Activated T-helper 1 cell treated with anti-CD3 and anti-CD28 coated beads, Interleukin-12 subunit alpha, Interleukin-12 subunit beta, Interleukin-2, Interleukin-4 antibody, amounts not matched to agents 30 ng/mL and 10 ng/mL and 1 ng/mL, durations not matched to agents 14 hours and 24 hours and 36 hours (primary cell): ENCODE measurements at regions of chr14 and their contacts with region 1.

Region 1: GRCh38 chr14:50785457-50786063 is 45.4 kb downstream of the NIN start:
- DNase-seq: no peak
- H3K4me3 Mint-ChIP-seq: peak overlapping the region; percentile 56
- H3K27ac Mint-ChIP-seq: peak overlapping the region; percentile 79
- H3K4me1 Mint-ChIP-seq: peaks cover 61% of the 10 kb centered on the region
- H3K27me3 Mint-ChIP-seq: no peaks in the 10 kb centered on the region

Region 2: GRCh38 chr14:50344116-50344775 is 441.3 kb before region 1 on chr14:
- intact Hi-C with region 1: loop called (anchors 1 kb)
- DNase-seq: peak; percentile 47
- H3K4me3 Mint-ChIP-seq: peak overlapping the region; percentile 30
- H3K27ac Mint-ChIP-seq: peak overlapping the region; percentile 69
- H3K4me1 Mint-ChIP-seq: peaks cover 32% of the 10 kb centered on the region
- H3K27me3 Mint-ChIP-seq: peaks cover 18% of the 10 kb centered on the region

Region 3: GRCh38 chr14:50736932-50737419 is 48.6 kb before region 1 on chr14:
- intact Hi-C with region 1: loop called (anchors 2 kb)
- DNase-seq: peak; percentile 18
- H3K4me3 Mint-ChIP-seq: no peak overlapping the region
- H3K27ac Mint-ChIP-seq: peak overlapping the region; percentile 87
- H3K4me1 Mint-ChIP-seq: peaks cover 45% of the 10 kb centered on the region
- H3K27me3 Mint-ChIP-seq: no peaks in the 10 kb centered on the region

Region 4: GRCh38 chr14:50762001-50762930 is 23.3 kb before region 1 on chr14:
- intact Hi-C with region 1: loop called (anchors 1 kb)
- DNase-seq: no peak
- H3K4me3 Mint-ChIP-seq: peak overlapping the region; percentile 7
- H3K27ac Mint-ChIP-seq: peak overlapping the region; percentile 74
- H3K4me1 Mint-ChIP-seq: peaks cover 19% of the 10 kb centered on the region
- H3K27me3 Mint-ChIP-seq: no peaks in the 10 kb centered on the region

Region 5: GRCh38 chr14:50813544-50813863 is 27.9 kb after region 1 on chr14:
- intact Hi-C with region 1: loop called (anchors 2 kb)
- DNase-seq: no peak
- H3K4me3 Mint-ChIP-seq: peak overlapping the region; percentile 35
- H3K27ac Mint-ChIP-seq: peak overlapping the region; percentile 72
- H3K4me1 Mint-ChIP-seq: peaks cover 33% of the 10 kb centered on the region
- H3K27me3 Mint-ChIP-seq: no peaks in the 10 kb centered on the region

Region 6: DNA sequence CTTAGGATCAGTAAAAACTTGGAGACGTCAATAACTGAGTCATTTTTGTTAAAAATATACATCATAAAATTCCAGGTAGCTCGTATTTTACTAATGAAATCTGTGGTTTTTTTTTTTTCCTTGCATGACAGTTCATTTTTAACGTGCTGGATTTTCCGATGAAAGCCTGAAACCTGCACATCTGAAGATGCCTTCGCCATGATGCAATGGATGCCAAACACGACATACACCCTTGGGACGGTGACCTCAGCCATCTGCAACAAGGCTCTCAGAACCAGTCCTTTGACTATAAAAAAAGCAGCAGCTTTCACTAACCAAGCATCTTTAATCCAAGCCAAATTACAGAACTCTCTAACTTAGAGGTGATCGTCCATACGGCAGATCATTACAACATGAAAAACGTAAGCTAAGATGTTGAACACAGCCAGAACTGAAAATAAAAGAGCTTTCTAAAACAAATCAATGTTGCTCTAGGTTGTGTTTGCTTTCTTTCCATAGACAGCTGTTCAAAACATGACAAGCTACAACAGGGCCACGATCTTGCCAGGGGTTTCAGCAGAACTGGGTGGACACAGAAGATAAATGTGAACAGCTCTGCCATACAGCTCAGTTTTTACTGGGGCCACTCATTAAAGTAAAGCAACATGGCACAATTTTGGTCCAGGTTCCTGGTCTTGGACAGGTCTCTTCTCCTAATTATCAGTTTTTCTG is 37.6 kb after region 1 on chr14:
- intact Hi-C with region 1: loop called (anchors 1 kb)
- DNase-seq: no peak
- H3K4me3 Mint-ChIP-seq: peak overlapping the region; percentile 61
- H3K27ac Mint-ChIP-seq: peak overlapping the region; percentile 74
- H3K4me1 Mint-ChIP-seq: peaks cover 81% of the 10 kb centered on the region
- H3K27me3 Mint-ChIP-seq: peaks cover 2% of the 10 kb centered on the region

Region 7: DNA sequence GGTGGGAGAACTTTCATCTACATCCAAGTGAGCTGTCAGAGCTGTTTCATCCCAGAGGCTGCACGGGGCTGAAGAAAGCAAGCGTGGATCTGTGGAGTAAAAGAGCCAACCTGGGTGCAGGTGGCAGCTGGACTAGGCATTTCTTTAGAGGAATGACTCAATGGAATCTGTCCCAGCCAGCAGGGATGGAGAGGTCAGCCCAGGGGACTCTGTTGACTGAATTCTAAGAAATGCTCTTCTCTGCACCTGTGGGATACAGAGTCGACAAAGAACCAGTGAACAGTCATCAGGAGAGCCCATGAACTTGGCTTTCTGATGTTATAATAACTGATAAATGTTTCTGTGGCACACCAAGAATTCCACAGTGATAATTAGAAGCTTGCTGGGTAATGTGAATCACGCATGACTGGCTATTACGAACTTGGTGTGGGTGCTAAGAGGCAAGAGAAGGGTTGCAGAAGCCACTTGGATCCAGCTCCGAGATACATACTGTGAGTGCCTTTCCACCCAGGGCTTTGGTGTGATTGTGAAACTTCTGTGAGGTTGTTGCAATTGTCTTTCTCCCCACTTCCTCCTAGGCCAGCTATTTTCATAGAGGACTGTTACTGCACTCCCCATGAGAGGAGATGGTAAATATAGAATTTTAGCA is 142.6 kb after region 1 on chr14:
- intact Hi-C with region 1: no loop called
- DNase-seq: no peak
- H3K4me3 Mint-ChIP-seq: no peak overlapping the region
- H3K27ac Mint-ChIP-seq: no peak overlapping the region
- H3K4me1 Mint-ChIP-seq: no peaks in the 10 kb centered on the region
- H3K27me3 Mint-ChIP-seq: peaks cover 3% of the 10 kb centered on the region